Common myeloid progenitor, CD34-positive (primary cell): ENCODE measurements at regions of chr3 and their contacts with region 1.

Region 1: DNA sequence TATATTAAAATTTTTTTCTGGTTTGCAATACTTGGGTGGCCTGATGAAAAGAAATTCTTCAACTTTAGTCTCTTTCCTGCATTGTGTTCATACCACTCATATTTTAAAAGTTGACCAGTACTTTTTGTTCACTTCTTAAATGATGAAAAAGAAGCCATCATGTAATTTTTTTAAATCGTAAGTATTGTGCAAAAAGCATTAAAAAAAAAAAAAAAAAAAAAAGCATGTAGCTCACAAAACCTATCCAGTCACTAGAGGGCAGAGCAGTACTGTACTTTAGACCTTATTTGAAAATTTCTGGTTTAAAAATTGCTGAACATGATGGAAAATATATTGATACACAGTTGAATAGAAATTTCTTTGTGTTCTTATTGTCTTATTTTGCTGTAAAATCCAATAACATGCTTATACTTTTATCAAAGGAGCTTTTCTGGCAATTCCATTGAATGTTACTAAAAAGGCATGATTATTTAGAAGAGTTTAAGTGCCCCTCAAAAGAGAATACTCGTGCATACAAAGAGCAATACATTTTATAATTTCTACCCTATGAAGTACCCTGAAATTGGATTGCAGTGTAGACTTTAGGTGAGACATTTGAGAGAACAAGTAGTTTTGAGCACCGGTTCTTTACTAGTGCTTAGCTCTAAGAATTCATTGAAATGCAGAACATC is 137.7 kb downstream of the BBX start:
- DNase-seq: peak; percentile 35 to 71 (median 63)
- H3K4me3 ChIP-seq: no peak overlapping the region
- H3K27ac ChIP-seq: no peak overlapping the region
- H3K4me1 ChIP-seq: no peaks in the 10 kb centered on the region
- H3K27me3 ChIP-seq: no peaks in the 10 kb centered on the region

Region 2: DNA sequence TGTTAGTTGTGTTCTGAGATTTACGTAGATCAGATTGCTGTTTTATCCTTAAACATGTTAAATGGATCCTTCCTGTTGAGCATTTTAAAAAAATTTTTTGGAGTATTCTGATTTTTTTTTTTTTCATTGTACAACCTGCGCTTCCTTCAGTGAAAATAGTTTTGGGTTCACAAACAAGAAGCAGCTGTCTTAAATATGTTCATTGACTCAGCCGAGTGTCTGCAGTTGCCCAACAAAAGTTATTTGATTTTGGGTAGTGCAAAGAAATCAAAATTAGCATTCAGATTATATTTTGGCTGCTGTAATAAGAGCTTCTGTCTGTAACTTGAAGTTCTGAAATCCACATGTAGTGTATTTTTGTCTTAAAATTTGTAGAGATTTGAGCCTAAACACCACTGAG is 10.5 kb after region 1 on chr3:
- CTCF ChIA-PET with region 1: interaction called, 28 read pairs
- POLR2A ChIA-PET with region 1: interaction called, 3 read pairs
- DNase-seq: no peak
- H3K4me3 ChIP-seq: no peak overlapping the region
- H3K27ac ChIP-seq: no peak overlapping the region
- H3K4me1 ChIP-seq: peaks cover 9 to 11% (median 10%) of the 10 kb centered on the region in 4 experiments
- H3K27me3 ChIP-seq: no peaks in the 10 kb centered on the region

Region 3: DNA sequence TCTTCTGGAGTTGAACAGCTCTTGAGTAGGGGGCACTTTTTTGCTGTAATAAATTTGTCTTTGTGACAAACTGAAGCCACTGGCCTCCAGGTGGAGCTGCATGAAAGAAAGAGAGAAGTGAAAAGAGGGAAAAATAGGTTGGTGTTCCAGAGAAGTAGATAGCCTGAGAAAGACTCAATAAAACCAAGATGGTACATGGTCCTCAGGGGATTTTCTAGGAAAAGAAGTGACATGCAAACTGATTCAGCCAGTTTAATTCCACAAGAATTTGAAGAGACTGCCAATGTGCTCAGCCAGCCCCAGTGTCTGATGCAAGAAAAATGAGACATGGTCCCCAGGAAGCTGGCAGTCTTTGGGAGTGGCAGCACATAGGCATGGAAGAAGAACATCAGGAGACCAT is 277.7 kb after region 1 on chr3:
- CTCF ChIA-PET with region 1: no interaction called
- POLR2A ChIA-PET with region 1: no interaction called
- DNase-seq: peak; percentile 38 to 52 (median 39)
- H3K4me3 ChIP-seq: no peak overlapping the region
- H3K27ac ChIP-seq: no peak overlapping the region
- H3K4me1 ChIP-seq: no peaks in the 10 kb centered on the region
- H3K27me3 ChIP-seq: no peaks in the 10 kb centered on the region